Ascending aorta (tissue), 2 donors: ENCODE measurements at regions of chr6 and their contacts with region 1.

Region 1: GRCh38 chr6:52361945-52362442 is at the start of gene PAQR8:
- DNase-seq: peak; percentile 24 to 83
- H3K4me3 ChIP-seq: peak within 1 kb of the TSS; percentile 87 to 90
- H3K27ac ChIP-seq: peak within 1 kb of the TSS; percentile 36 to 54
- H3K4me1 ChIP-seq: peaks cover 0 to 3% of the 10 kb centered on the region in 2 donors
- H3K27me3 ChIP-seq: no peaks in the 10 kb centered on the region
- CTCF ChIP-seq: peak in 1 of 3 experiments; percentile 1
- total RNA-seq, gene PAQR8: 6.1 TPM

Region 2: DNA sequence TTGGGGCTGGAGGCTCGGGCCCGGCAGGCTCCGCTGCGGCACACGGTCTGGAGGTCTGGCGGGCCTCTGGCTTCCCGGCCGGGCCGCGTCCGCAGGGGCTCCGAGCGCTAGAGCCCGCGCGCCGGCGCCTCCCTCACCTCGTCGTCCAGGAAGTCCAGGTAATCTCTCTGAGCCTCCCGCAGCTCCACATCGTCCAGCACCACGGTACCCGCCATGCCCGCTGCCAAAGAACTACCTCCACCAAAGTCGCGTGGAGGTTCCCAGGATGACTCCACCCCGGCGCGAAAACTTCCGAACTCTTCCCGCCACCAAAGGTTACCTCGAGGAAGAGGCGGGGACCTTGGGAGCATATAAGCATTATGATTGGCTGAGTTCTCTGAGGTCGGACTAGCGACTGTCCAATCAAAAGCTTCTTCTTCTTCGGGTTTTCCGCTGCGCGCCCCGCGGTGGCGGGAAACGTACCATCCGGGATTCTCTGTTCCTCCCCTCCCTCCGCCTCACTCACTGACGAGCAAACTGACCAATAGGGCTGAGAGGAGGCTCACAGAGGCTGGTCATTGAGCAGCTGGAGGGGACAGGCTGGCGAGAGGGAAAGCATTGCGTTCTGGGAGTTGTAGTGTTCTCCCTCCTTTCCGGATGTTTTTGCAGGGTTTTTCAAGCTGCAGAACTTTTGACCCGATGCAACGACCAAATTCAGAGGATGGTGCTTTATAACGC is 77.4 kb before region 1 on chr6 and contains the start of gene MCM3:
- intact Hi-C with region 1: loop called (anchors 1 kb)
- DNase-seq: peak; percentile 96 to 99
- H3K4me3 ChIP-seq: peak within 1 kb of the TSS; percentile 75 to 100
- H3K27ac ChIP-seq: peak within 1 kb of the TSS; percentile 71 to 72
- H3K4me1 ChIP-seq: peaks cover 10 to 11% of the 10 kb centered on the region in 2 donors
- H3K27me3 ChIP-seq: no peaks in the 10 kb centered on the region
- CTCF ChIP-seq: no peak
- total RNA-seq, gene MCM3: 44.6 TPM

Region 3: GRCh38 chr6:52598123-52598823 is 236.3 kb after region 1 on chr6:
- intact Hi-C with region 1: loop called (anchors 5 kb)
- DNase-seq: peak in 1 of 2 donors; percentile 85
- H3K4me3 ChIP-seq: peak overlapping the region in 1 of 2 donors; percentile 46
- H3K27ac ChIP-seq: peak overlapping the region; percentile 64 to 78
- H3K4me1 ChIP-seq: peaks cover 16 to 33% of the 10 kb centered on the region in 2 donors
- H3K27me3 ChIP-seq: no peaks in the 10 kb centered on the region
- CTCF ChIP-seq: peak; percentile 64 to 79 (median 69)

Region 4: GRCh38 chr6:53064726-53065215 is 702.8 kb after region 1 on chr6:
- intact Hi-C with region 1: loop called (anchors 5 kb)
- DNase-seq: peak; percentile 95 to 99
- H3K4me3 ChIP-seq: peak overlapping the region; percentile 97 to 98
- H3K27ac ChIP-seq: peak overlapping the region; percentile 94 to 95
- H3K4me1 ChIP-seq: peaks cover under 1 to 4% of the 10 kb centered on the region in 2 donors
- H3K27me3 ChIP-seq: no peaks in the 10 kb centered on the region
- CTCF ChIP-seq: no peak

Region 5: DNA sequence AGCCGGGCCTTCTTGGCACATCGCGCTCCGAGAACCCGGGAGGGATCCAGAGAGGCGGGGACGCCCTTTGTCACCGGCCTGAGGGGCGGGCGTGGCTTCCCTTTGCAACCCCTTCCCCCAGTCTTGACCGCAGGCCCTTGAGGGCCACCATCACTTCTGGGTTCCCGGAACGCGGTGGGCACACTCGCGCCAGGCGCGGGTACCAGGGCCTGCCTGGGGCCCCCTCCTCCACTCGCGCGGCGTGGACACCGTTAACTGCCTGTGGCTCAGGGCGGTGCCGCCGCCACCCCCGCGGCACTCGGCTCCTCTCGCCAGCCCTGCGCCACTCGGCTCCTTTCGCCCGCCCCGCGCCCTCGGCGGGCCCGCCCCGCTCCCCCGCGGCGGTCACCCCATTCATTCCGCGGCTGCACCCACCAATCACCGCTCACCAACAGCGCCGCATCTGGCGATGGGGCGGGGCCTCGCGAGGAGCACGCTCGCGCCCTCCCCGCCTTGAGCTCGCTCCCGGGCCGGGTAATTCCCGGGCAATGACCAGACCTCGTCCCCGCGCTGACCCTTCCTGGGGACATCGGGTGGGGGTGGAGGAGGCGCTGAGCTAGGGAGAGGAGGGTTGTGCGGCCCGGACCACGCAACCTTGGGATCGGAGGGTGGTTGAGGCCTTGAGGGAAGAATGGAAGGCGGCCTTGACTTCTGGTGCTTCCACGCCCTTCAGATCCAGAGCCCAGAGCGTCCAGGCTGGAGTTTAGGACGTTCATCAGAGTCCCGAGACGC is 997.3 kb after region 1 on chr6:
- intact Hi-C with region 1: loop called (anchors 10 kb)
- DNase-seq: peak; percentile 87 to 98
- H3K4me3 ChIP-seq: peak overlapping the region; percentile 53 to 80
- H3K27ac ChIP-seq: peak overlapping the region; percentile 78 to 94
- H3K4me1 ChIP-seq: peaks cover 0 to 4% of the 10 kb centered on the region in 2 donors
- H3K27me3 ChIP-seq: no peaks in the 10 kb centered on the region
- CTCF ChIP-seq: no peak